Colonic mucosa (tissue), 4 donors: ENCODE measurements at regions of chr13 and their contacts with region 1.

Region 1: GRCh38 chr13:110705826-110706569 is at the start of gene CARS2:
- DNase-seq: peak; percentile 98
- H3K4me3 ChIP-seq: peak within 1 kb of the TSS; percentile 64
- H3K27ac ChIP-seq: peak within 1 kb of the TSS; percentile 60
- H3K4me1 ChIP-seq: no peaks in the 10 kb centered on the region
- H3K27me3 ChIP-seq: no peaks in the 10 kb centered on the region
- CTCF ChIP-seq: no peak
- total RNA-seq, gene CARS2: 43.0 to 82.6 TPM

Region 2: DNA sequence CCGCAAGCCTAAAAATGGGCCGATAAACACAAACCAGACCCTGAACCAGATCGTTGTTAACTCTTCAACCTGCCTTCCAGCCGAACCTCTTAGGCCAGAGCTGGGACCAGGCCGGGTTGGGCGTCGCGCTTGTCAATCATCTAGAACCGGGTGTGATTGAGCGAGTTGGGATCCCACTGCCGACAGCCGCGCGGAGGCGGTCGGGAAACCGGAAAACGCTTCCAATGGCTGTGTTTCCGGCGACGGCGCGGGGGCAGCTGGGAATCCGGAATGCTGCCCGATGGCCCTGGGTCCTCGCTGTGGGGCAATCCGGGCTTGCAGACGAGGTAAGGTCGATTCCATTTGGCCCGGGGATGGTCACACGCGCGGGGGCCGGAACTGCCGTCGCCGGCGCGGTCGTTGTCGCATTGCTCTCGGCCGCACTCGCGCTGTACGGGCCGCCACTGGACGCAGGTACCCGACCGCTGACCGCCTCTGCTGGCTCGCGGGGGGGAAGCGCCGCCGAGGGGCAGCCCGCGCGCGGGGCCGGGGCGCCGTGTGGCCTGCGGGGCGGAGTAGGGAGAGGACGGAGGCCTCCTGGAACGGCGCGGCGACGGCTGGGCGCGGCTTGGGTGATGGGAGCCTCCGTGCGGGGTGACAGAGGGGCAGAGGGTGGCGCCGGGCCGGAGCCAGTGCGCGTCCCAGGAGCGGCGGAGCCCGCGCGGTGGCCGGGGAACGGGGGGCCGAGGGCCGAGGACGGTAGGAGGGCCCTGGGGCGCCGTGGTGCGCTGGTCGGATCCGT is 90.5 kb before region 1 on chr13 and contains the start of gene NAXD:
- intact Hi-C with region 1: loop called (anchors 10 kb)
- DNase-seq: peak; percentile 96
- H3K4me3 ChIP-seq: peak within 1 kb of the TSS; percentile 95
- H3K27ac ChIP-seq: peak within 1 kb of the TSS; percentile 91
- H3K4me1 ChIP-seq: peaks cover 4% of the 10 kb centered on the region
- H3K27me3 ChIP-seq: no peaks in the 10 kb centered on the region
- CTCF ChIP-seq: no peak
- total RNA-seq, gene NAXD: 36.7 to 40.4 TPM

Region 3: GRCh38 chr13:110869231-110869804 is 163.3 kb after region 1 on chr13:
- intact Hi-C with region 1: no loop called
- DNase-seq: no peak
- H3K4me3 ChIP-seq: peak overlapping the region; percentile 17
- H3K27ac ChIP-seq: peak overlapping the region; percentile 65
- H3K4me1 ChIP-seq: peaks cover 5% of the 10 kb centered on the region
- H3K27me3 ChIP-seq: no peaks in the 10 kb centered on the region
- CTCF ChIP-seq: no peak

Region 4: DNA sequence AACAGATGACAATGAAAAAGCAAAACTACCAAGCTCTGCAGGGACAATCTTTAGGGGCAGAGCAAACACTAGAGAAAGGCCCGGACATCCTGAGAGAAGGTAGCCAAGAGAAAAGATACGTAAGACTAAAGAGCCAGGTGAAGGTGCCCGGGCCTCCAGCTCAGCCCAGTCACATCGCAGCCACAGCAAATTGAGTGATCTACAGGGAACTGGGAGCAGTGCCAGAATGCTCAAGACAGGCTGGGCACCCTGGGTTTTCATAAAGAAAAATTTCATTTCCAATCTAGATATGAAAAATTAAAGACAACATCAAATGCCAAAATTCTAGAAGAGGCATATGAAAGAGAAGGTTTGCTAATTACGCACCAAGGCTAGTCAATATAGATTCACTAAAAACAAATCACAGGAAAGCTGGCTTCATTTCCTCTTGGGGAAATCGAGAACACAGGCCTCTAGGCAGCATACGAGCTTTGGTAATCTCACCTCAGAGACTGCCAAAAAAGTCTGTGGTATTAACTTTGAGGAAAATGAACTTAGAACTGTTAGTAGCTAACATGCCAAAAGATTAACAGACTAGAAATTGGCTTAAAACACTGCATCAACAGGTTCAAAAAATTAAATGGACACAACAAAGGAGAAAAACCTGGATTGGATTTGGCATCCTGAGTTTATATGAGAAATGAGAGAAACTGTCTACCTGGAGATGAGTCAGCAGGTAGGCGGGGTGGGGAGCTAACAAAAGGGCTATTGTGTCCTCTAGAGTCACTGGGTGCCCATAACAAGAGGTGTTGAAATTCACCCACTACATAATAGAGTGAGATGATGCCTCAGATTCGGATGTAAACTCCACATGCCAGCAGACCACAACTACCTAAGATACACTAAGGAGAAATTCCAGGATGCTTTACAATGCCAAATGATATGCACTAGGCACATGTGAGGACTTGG is 202.2 kb after region 1 on chr13:
- intact Hi-C with region 1: loop called (anchors 10 kb)
- DNase-seq: peak; percentile 81
- H3K4me3 ChIP-seq: no peak overlapping the region
- H3K27ac ChIP-seq: peak overlapping the region; percentile 71
- H3K4me1 ChIP-seq: peaks cover 8% of the 10 kb centered on the region
- H3K27me3 ChIP-seq: no peaks in the 10 kb centered on the region
- CTCF ChIP-seq: no peak